ENCODE measurements at regions of chr5 and their contacts with region 1.

Region 1: DNA sequence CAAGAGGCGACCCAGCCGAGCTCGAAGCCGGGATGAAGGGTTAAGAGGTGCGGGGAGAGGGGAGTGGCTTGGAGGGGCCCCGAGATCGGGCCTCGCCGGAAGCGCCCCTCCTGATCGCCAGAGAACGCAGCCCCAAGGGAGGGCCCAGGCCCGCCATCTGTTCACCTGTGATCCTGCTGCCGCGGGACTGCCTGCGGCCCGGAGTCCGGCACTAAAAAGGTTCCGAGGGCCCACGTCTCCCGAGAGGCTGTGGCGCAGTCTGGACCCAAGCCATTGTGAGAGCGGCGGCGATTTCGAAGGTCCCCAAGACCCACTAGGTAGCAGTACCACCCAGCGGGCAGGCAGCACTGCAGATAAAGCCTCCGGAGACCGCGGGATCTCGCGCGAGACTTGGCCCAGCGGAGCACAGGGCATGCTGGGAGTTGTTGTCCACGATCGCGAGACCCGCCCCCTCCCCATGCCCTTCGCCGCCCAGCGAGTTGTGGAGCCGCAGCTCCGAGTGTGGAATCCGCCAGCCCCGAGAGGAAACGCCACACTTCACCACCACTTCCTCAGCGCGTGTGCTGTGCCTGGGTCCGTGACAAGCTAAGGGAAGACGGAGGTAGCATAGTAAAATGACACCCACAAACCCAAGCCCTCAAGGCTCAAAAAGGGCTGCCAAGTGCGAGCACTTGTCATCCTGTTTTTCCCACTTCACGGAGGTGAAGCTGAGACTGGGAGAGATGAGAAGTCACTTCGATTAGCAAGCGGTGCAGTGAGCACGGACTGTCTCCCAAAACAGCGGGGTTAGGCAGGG is at the start of gene KIAA1191:
- DNase-seq: peak; percentile 96 to 97
- ATAC-seq: peak; percentile 94 to 98 (median 98)
- H3K4me3 ChIP-seq: peak within 1 kb of the TSS; percentile 58 to 100 (median 95)
- H3K27ac ChIP-seq: peak within 1 kb of the TSS in 9 of 10 donors; percentile 60 to 94 (median 86)
- H3K4me1 ChIP-seq: peaks cover 0 to 39% (median 28%) of the 10 kb centered on the region in 9 donors
- H3K27me3 ChIP-seq: peaks cover 0 to 21% (median 0%) of the 10 kb centered on the region in 7 donors
- CTCF ChIP-seq: peak in 6 of 9 donors; percentile 8 to 58 (median 40)
- total RNA-seq, gene KIAA1191: 74.9 to 121 (median 91.9) TPM

Region 2: GRCh38 chr5:176133289-176133870 is 228.3 kb before region 1 on chr5:
- intact Hi-C with region 1: no loop called
- DNase-seq: no peak
- ATAC-seq: peak in 1 of 8 donors; percentile 26
- H3K4me3 ChIP-seq: no peak overlapping the region
- H3K27ac ChIP-seq: no peak overlapping the region
- H3K4me1 ChIP-seq: peaks cover 0 to 7% (median 0%) of the 10 kb centered on the region in 9 donors
- H3K27me3 ChIP-seq: peaks cover 0 to 55% (median 43%) of the 10 kb centered on the region in 7 donors
- CTCF ChIP-seq: no peak

Region 3: GRCh38 chr5:176388444-176389134 is 27.0 kb after region 1 on chr5 and contains the starts of genes HIGD2A and NOP16:
- intact Hi-C with region 1: loop called in 1 of 10 experiments (anchors 2 kb)
- DNase-seq: peak; percentile 99 to 100
- ATAC-seq: peak; percentile 94 to 98 (median 96)
- H3K4me3 ChIP-seq: peak within 1 kb of the TSS; percentile 52 to 99 (median 78)
- H3K27ac ChIP-seq: peak within 1 kb of the TSS; percentile 91 to 99 (median 95)
- H3K4me1 ChIP-seq: peaks cover 6 to 39% (median 27%) of the 10 kb centered on the region in 9 donors
- H3K27me3 ChIP-seq: no peaks in the 10 kb centered on the region
- CTCF ChIP-seq: no peak
- total RNA-seq, gene HIGD2A: 198 to 276 (median 228) TPM
- total RNA-seq, gene NOP16: 11.3 to 25.9 (median 18.5) TPM

Region 4: GRCh38 chr5:176400382-176401156 is 38.9 kb after region 1 on chr5:
- intact Hi-C with region 1: loop called in 1 of 10 experiments (anchors 5 kb)
- DNase-seq: no peak
- ATAC-seq: peak in 5 of 8 donors; percentile 4 to 40 (median 22)
- H3K4me3 ChIP-seq: no peak overlapping the region
- H3K27ac ChIP-seq: peak overlapping the region in 8 of 10 donors; percentile 39 to 77 (median 64)
- H3K4me1 ChIP-seq: peaks cover 7 to 47% (median 32%) of the 10 kb centered on the region in 9 donors
- H3K27me3 ChIP-seq: no peaks in the 10 kb centered on the region
- CTCF ChIP-seq: no peak